ENCODE measurements at regions of chr1 and their contacts with region 1.

Region 1: GRCh38 chr1:70221241-70222121 is at the start of gene SRSF11:
- DNase-seq: peak; percentile 95 to 99 (median 98)
- ATAC-seq: peak; percentile 93
- H3K4me3 ChIP-seq: peak within 1 kb of the TSS; percentile 71
- H3K4me3 Mint-ChIP-seq: peak within 1 kb of the TSS; percentile 92
- H3K27ac ChIP-seq: peak within 1 kb of the TSS; percentile 91 to 94
- H3K27ac Mint-ChIP-seq: peak within 1 kb of the TSS; percentile 97
- H3K4me1 ChIP-seq: peaks cover 10% of the 10 kb centered on the region
- H3K4me1 Mint-ChIP-seq: peaks cover 60% of the 10 kb centered on the region
- H3K27me3 ChIP-seq: no peaks in the 10 kb centered on the region
- H3K27me3 Mint-ChIP-seq: no peaks in the 10 kb centered on the region
- CTCF ChIP-seq: peak; percentile 9
- total RNA-seq, gene SRSF11: 454 to 459 TPM

Region 2: DNA sequence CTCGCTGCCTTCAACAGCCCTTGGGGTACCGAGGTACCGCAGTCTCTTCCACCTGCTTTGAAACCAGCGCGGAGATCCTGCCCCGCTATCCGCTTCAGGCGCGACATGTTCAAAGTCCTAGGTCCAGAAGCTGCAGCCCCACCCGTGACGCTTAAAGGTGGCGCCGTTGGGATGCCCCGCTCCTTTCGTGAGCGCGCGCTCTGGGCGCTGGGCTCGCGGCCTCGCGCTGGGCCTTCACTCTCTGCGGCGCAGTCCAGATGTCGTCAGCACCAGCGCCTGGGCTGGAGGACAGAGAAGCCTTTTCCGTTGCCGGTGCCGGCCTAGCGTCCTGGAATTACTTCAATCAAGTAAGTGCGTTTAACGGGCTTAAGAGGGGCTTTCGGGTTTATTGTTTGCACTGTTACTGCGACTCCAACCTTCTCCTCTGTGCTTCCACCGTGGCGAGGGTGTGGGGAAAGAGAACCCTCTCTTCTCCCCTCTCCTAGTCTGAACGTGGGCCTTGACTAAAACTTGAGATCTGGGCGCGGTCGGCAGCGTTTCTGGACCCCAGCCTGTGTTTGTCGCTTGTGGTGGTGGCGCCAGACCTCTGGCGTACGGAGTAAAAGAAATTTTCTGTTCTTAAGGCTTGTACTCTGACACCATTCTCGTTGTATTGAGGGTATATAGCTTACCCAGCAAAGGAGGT is 15.9 kb before region 1 on chr1 and contains the start of gene LRRC40:
- CTCF ChIA-PET with region 1: interaction called, 15 read pairs
- POLR2A ChIA-PET with region 1: interaction called, 128 read pairs
- intact Hi-C with region 1: loop called (anchors 1 kb)
- DNase-seq: peak; percentile 88 to 98 (median 95)
- ATAC-seq: peak; percentile 90
- H3K4me3 ChIP-seq: peak within 1 kb of the TSS; percentile 81
- H3K4me3 Mint-ChIP-seq: peak within 1 kb of the TSS; percentile 99
- H3K27ac ChIP-seq: peak within 1 kb of the TSS; percentile 85 to 97
- H3K27ac Mint-ChIP-seq: peak within 1 kb of the TSS; percentile 99
- H3K4me1 ChIP-seq: peaks cover 38% of the 10 kb centered on the region
- H3K4me1 Mint-ChIP-seq: peaks cover 84% of the 10 kb centered on the region
- H3K27me3 ChIP-seq: no peaks in the 10 kb centered on the region
- H3K27me3 Mint-ChIP-seq: no peaks in the 10 kb centered on the region
- CTCF ChIP-seq: no peak
- total RNA-seq, gene LRRC40: 12.4 to 13.3 TPM

Region 3: GRCh38 chr1:70234733-70235132 is 13.3 kb after region 1 on chr1:
- CTCF ChIA-PET with region 1: interaction called, 3 read pairs
- POLR2A ChIA-PET with region 1: interaction called, 19 read pairs
- intact Hi-C with region 1: no loop called
- DNase-seq: no peak
- ATAC-seq: no peak
- H3K4me3 ChIP-seq: no peak overlapping the region
- H3K4me3 Mint-ChIP-seq: no peak overlapping the region
- H3K27ac ChIP-seq: no peak overlapping the region
- H3K27ac Mint-ChIP-seq: no peak overlapping the region
- H3K4me1 ChIP-seq: no peaks in the 10 kb centered on the region
- H3K4me1 Mint-ChIP-seq: peaks cover 23% of the 10 kb centered on the region
- H3K27me3 ChIP-seq: no peaks in the 10 kb centered on the region
- H3K27me3 Mint-ChIP-seq: no peaks in the 10 kb centered on the region
- CTCF ChIP-seq: no peak

Region 4: DNA sequence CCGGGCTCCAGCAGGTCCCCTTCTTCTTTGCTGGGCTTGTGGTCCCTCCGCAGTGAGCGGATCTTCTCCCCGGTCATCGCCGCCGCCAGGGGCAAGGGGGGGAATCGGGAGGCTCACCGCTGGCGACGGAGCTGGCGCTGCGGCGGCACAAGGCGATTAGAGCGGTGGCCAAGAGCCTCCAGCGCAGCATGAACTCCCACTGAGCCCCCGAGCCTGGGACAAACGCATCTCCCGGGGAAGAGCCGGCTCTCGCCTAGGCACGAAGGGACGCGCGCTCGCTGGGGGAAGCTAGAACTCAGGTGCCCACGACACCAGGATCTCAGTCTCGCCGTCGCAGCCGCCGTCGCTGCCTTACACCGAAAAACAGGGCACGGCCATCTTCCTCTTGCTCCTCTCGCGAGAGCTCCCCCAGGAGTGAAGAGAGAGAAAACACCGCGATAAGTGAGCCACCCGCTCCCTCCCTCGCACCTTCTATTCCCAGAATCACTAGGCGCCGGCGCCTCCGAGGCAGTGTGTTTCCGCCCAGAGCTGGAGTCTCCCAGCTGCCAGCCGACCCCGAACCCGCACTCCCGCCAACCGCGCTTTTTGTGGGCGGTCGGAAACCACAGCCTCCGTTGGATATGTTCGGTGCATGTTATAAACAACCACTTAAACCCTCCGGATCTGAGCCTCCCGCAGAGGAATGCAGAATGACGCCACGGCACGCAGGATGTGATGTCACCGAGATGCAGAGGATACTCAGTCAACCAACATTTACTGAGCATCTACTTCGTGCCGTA is 133.0 kb after region 1 on chr1 and contains the start of gene ANKRD13C:
- CTCF ChIA-PET with region 1: no interaction called
- POLR2A ChIA-PET with region 1: interaction called, 30 read pairs
- intact Hi-C with region 1: loop called (anchors 5 kb)
- DNase-seq: peak; percentile 79 to 97 (median 86)
- ATAC-seq: peak; percentile 89
- H3K4me3 ChIP-seq: peak within 1 kb of the TSS; percentile 98
- H3K4me3 Mint-ChIP-seq: peak within 1 kb of the TSS; percentile 91
- H3K27ac ChIP-seq: peak within 1 kb of the TSS; percentile 94 to 95
- H3K27ac Mint-ChIP-seq: peak within 1 kb of the TSS; percentile 97
- H3K4me1 ChIP-seq: peaks cover 28% of the 10 kb centered on the region
- H3K4me1 Mint-ChIP-seq: peaks cover 50% of the 10 kb centered on the region
- H3K27me3 ChIP-seq: no peaks in the 10 kb centered on the region
- H3K27me3 Mint-ChIP-seq: no peaks in the 10 kb centered on the region
- CTCF ChIP-seq: no peak
- total RNA-seq, gene ANKRD13C: 37.4 to 37.8 TPM

Region 5: GRCh38 chr1:70397014-70397413 is 175.5 kb after region 1 on chr1:
- CTCF ChIA-PET with region 1: no interaction called
- POLR2A ChIA-PET with region 1: no interaction called
- intact Hi-C with region 1: no loop called
- DNase-seq: no peak
- ATAC-seq: no peak
- H3K4me3 ChIP-seq: no peak overlapping the region
- H3K4me3 Mint-ChIP-seq: no peak overlapping the region
- H3K27ac ChIP-seq: no peak overlapping the region
- H3K27ac Mint-ChIP-seq: no peak overlapping the region
- H3K4me1 ChIP-seq: no peaks in the 10 kb centered on the region
- H3K4me1 Mint-ChIP-seq: no peaks in the 10 kb centered on the region
- H3K27me3 ChIP-seq: no peaks in the 10 kb centered on the region
- H3K27me3 Mint-ChIP-seq: peaks cover 10% of the 10 kb centered on the region
- CTCF ChIP-seq: no peak

Region 6: DNA sequence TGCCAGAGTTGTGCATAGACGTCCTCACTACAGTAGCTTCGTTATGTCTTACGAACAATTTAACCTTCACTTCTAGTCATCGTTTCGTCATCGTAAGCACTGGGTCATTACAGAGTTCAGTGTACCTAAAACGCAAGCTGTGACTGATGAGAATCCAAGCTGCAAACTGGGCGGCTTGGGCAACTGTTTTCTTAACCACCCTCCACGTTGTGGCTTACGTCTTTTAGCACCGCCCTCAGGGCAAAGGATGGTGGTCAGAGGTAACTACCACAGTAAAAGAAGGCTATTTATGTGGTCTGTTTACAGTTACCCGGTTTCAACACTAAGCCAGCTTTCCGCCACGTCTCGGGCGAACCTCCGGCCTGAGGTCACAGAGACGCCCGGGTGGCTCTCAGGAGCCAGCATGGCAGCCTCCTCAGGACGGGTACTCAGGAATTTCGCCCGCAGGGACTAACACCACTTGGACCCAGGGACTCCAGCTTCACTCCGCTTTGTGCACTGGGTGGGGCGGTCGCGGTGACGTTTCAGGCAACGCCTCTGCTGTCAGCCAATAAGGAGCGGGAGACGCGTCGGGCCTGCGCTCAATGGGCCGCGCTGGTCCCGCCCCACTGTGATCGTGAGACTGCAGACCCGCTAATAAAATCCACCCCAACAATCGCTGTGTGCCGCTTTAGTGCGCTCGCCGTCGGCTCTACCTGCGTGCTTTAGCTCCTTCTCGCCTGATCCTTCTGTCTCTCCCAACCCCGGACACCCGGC is 189.3 kb after region 1 on chr1 and contains the start of gene CTH:
- CTCF ChIA-PET with region 1: no interaction called
- POLR2A ChIA-PET with region 1: interaction called, 36 read pairs
- intact Hi-C with region 1: loop called (anchors 5 kb)
- DNase-seq: peak; percentile 76 to 97 (median 89)
- ATAC-seq: peak; percentile 91
- H3K4me3 ChIP-seq: peak within 1 kb of the TSS; percentile 94
- H3K4me3 Mint-ChIP-seq: peak within 1 kb of the TSS; percentile 96
- H3K27ac ChIP-seq: peak within 1 kb of the TSS; percentile 82 to 96
- H3K27ac Mint-ChIP-seq: peak within 1 kb of the TSS; percentile 97
- H3K4me1 ChIP-seq: peaks cover 10% of the 10 kb centered on the region
- H3K4me1 Mint-ChIP-seq: peaks cover 31% of the 10 kb centered on the region
- H3K27me3 ChIP-seq: no peaks in the 10 kb centered on the region
- H3K27me3 Mint-ChIP-seq: peaks cover 6% of the 10 kb centered on the region
- CTCF ChIP-seq: no peak
- total RNA-seq, gene CTH: 5.6 to 7.9 TPM

Region 7: DNA sequence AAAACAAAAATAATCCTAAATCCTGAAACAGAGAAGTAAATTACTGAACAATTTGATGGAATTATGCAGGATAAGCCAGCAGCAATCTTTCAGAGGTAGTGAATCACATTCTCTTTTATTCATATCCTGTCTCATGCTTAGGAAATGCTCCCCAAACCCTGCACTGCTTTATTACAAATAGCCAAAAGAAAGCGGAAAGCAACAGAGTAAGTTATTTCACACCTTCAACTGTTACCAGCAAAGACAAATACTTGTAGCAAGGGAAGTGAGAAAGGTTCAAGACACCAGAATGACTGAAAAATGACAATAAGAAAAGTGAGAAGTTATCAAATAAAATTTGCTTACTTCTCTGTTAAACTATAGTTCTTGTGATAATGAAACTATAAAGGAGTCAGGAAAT is 853.2 kb after region 1 on chr1:
- CTCF ChIA-PET with region 1: no interaction called
- POLR2A ChIA-PET with region 1: no interaction called
- intact Hi-C with region 1: loop called in 1 of 2 experiments (anchors 5 kb)
- DNase-seq: no peak
- ATAC-seq: no peak
- H3K4me3 ChIP-seq: no peak overlapping the region
- H3K4me3 Mint-ChIP-seq: no peak overlapping the region
- H3K27ac ChIP-seq: no peak overlapping the region
- H3K27ac Mint-ChIP-seq: peak overlapping the region; percentile 44
- H3K4me1 ChIP-seq: no peaks in the 10 kb centered on the region
- H3K4me1 Mint-ChIP-seq: peaks cover 62% of the 10 kb centered on the region
- H3K27me3 ChIP-seq: no peaks in the 10 kb centered on the region
- H3K27me3 Mint-ChIP-seq: no peaks in the 10 kb centered on the region
- CTCF ChIP-seq: no peak

Region 8: DNA sequence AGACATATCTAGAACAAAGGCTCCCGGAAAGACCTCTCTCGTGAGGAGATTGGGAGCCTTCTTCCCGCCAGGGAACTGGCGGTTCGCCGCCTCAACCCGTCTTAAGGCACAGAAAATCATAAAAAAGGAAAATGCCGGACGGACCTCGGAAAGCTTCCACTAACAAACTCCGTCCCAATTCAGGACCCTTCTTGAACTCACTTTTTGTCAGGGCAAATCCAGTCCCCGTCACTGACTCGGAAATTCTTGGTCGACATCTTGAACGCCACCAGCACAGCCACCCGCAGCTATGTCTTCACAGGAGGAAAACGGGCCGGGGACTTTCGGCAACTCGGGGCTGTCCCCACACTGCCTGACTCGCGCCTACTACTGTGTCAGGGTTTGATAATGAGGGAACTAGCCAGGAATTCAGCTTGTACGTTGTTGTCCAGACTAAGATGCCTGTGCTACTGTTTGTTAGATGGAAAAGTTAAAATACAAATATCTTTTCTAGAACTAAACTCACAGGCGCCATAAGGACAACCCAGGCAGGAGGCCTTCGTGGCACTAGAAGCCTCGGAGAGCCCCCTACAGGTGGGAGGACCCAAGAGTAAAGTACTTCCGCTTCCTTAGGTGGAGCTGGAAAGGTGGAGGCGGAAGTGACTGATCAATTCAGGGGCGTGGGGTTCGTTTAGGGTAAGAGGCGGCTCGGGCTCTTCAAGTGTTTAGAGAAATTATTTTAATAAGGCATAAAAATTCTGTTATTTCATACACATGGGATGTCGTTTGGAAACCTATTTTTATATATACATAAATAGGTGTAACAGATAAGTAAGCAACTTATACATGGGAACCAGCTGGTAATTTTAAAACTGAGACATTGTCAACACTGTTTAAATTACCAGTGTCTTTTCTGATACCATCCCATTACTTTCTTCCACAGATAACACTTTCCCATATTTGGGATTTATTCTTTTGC is 859.5 kb after region 1 on chr1 and contains the start of gene ZRANB2:
- CTCF ChIA-PET with region 1: interaction called, 3 read pairs
- POLR2A ChIA-PET with region 1: interaction called, 21 read pairs
- intact Hi-C with region 1: loop called in 1 of 2 experiments (anchors 5 kb)
- DNase-seq: peak; percentile 82 to 97 (median 88)
- ATAC-seq: peak; percentile 97
- H3K4me3 ChIP-seq: peak within 1 kb of the TSS; percentile 95
- H3K4me3 Mint-ChIP-seq: peak within 1 kb of the TSS; percentile 97
- H3K27ac ChIP-seq: peak within 1 kb of the TSS; percentile 94 to 97
- H3K27ac Mint-ChIP-seq: peak within 1 kb of the TSS; percentile 100
- H3K4me1 ChIP-seq: peaks cover 9% of the 10 kb centered on the region
- H3K4me1 Mint-ChIP-seq: peaks cover 52% of the 10 kb centered on the region
- H3K27me3 ChIP-seq: peaks cover 6 to 21% of the 10 kb centered on the region in 2 experiments
- H3K27me3 Mint-ChIP-seq: peaks cover 28% of the 10 kb centered on the region
- CTCF ChIP-seq: peak; percentile 54
- total RNA-seq, gene ZRANB2: 102 TPM